GM12878 (cell line): ENCODE measurements at regions of chr16 and their contacts with region 1.

Region 1: DNA sequence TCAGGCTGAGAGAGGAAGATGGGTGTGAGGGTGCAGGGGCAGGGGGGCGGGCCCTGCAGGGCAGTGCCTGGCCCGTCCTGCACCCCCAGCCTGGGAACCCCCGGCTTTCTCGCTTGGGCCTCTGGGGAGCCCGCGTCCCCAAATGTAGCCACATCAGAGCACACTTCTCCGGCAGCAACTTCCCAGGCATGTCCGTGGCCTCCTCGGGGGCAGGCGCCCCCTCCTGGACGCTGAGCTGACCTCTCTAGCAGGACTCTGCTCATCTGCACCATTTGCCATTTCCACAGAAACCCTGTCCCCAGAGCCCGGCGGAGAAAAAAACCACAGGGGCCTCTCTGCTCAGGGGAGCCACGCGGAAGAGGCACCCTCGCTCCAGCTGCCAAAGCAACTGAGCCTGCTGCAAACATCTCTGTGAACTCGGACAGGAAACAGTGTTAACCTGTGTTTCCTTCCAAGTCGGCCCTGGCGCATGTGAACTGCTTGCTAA is 63.4 kb downstream of the KLHDC4 start:
- DNase-seq: peak; percentile 33
- ATAC-seq: peak; percentile 83
- H3K4me3 ChIP-seq: no peak overlapping the region
- H3K27ac ChIP-seq: no peak overlapping the region
- H3K4me1 ChIP-seq: peaks cover 45% of the 10 kb centered on the region
- H3K27me3 ChIP-seq: no peaks in the 10 kb centered on the region
- CTCF ChIP-seq: peak; percentile 53 to 68 (median 68)
- EP300 ChIP-seq: no peak
- POLR2A ChIP-seq: peak; percentile 14; the same call in 1 of the 2 replicates
- RAD21 ChIP-seq: peak; percentile 54

Region 2: GRCh38 chr16:87723226-87723623 is 20.9 kb after region 1 on chr16:
- CTCF ChIA-PET with region 1: interaction called, 10 read pairs
- POLR2A ChIA-PET with region 1: no interaction called
- RAD21 ChIA-PET with region 1: no interaction called
- SMC1A ChIA-PET with region 1: interaction called, 6 read pairs
- in situ Hi-C with region 1: no loop called
- intact Hi-C with region 1: no loop called
- DNase-seq: peak; percentile 58
- ATAC-seq: peak; percentile 79
- H3K4me3 ChIP-seq: no peak overlapping the region
- H3K27ac ChIP-seq: peak overlapping the region; percentile 87
- H3K4me1 ChIP-seq: peaks cover 25% of the 10 kb centered on the region
- H3K27me3 ChIP-seq: no peaks in the 10 kb centered on the region
- CTCF ChIP-seq: no peak
- EP300 ChIP-seq: peak in 1 of 2 experiments; percentile 30; a peak in 2 of 4 replicates
- POLR2A ChIP-seq: no peak
- RAD21 ChIP-seq: no peak